Activated CD8-positive, alpha-beta T cell treated with anti-CD3 and anti-CD28 coated beads, Interleukin-2, amount 10 ng/mL, durations not matched to agents 7 days and 5 days (primary cell): ENCODE measurements at regions of chr2 and their contacts with region 1.

Region 1: DNA sequence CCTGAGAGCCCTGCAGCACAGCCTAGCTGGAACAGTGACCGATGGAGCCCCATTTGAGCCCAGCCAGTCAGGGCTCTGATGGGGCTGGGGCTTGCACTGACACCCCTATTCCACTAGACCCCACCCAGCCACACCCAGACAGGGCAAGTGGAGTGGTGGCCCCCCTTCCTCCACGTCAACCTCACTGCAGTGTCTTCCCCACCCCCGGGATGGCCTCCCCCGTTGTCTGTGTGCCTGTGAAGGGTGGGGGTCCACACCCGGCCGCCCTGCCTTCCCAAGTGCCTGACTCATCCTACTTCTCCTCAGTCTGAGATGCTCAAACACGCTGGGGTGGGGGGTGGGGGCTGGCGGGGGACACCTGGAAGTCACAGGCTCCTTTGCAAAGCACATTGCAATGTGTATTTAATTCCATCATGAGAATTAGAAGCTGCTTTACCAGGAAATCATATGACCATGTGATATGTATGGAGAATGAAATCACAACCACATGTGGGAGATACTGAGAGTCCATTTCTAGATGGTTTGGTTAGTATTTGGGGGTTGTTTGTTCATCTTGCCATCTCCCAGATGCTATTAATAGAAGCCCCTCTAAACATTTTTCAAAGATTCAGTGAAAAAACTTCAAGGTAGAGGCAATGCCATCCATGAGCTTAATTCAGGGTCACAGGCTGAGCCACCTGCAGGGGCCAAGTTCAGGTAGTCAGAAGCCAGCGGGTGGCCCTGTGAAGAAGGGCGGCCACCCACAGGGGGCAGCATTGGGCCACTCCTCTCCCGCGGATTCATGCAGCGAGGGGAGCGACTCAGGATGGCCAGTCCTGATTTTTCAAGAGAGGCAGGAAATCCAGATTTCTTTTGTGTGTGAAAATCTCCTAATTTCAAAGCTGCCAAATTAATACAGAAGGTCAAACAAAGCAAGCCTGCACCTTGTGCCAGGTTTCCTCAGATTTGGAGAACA is 22.7 kb upstream of the GMPPA start:
- DNase-seq: peak; percentile 75
- ATAC-seq: peak; percentile 83
- H3K4me3 Mint-ChIP-seq: no peak overlapping the region
- H3K27ac Mint-ChIP-seq: no peak overlapping the region
- H3K4me1 Mint-ChIP-seq: peaks cover 5% of the 10 kb centered on the region
- H3K27me3 Mint-ChIP-seq: peaks cover 2% of the 10 kb centered on the region

Region 2: GRCh38 chr2:219408631-219409030 is 67.3 kb before region 1 on chr2:
- CTCF ChIA-PET with region 1: no interaction called
- POLR2A ChIA-PET with region 1: no interaction called
- DNase-seq: no peak
- ATAC-seq: no peak
- H3K4me3 Mint-ChIP-seq: no peak overlapping the region
- H3K27ac Mint-ChIP-seq: no peak overlapping the region
- H3K4me1 Mint-ChIP-seq: no peaks in the 10 kb centered on the region
- H3K27me3 Mint-ChIP-seq: peaks cover 11% of the 10 kb centered on the region

Region 3: DNA sequence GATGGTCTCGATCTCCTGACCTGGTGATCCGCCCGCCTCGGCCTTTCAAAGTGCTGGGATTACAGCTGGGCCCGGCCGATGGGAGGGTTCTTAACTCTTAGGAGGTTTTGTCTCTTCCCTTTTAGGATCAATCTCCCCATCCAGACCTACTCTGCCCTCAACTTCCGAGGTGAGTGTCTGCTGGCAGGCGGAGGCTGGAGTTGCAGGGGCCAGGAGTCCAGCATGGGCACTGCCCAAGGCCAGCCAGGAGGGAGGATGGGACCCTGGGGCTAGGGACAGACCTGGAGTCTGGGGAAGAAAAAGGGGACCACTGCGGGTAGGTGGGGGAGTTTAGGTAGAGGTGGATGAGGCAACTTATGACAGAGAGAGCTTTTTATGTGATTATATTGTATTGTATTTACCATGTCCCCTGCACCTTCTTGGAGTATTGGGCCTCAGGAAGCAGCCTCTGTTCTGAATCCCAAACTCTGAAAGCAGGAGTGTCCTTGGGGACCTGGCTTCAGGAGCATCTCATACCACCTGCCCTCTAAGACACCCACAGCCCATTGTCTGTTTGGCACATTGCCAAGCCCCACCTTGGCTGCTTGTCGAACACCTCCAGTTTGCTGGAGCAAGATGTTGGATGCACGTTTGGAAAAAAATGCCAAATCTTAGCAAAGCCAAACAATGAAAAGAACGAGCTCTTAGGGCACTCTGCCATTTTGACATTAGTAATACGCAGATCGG is 52.2 kb before region 1 on chr2:
- CTCF ChIA-PET with region 1: no interaction called
- POLR2A ChIA-PET with region 1: no interaction called
- DNase-seq: no peak
- ATAC-seq: no peak
- H3K4me3 Mint-ChIP-seq: no peak overlapping the region
- H3K27ac Mint-ChIP-seq: no peak overlapping the region
- H3K4me1 Mint-ChIP-seq: no peaks in the 10 kb centered on the region
- H3K27me3 Mint-ChIP-seq: peaks cover 14% of the 10 kb centered on the region

Region 4: DNA sequence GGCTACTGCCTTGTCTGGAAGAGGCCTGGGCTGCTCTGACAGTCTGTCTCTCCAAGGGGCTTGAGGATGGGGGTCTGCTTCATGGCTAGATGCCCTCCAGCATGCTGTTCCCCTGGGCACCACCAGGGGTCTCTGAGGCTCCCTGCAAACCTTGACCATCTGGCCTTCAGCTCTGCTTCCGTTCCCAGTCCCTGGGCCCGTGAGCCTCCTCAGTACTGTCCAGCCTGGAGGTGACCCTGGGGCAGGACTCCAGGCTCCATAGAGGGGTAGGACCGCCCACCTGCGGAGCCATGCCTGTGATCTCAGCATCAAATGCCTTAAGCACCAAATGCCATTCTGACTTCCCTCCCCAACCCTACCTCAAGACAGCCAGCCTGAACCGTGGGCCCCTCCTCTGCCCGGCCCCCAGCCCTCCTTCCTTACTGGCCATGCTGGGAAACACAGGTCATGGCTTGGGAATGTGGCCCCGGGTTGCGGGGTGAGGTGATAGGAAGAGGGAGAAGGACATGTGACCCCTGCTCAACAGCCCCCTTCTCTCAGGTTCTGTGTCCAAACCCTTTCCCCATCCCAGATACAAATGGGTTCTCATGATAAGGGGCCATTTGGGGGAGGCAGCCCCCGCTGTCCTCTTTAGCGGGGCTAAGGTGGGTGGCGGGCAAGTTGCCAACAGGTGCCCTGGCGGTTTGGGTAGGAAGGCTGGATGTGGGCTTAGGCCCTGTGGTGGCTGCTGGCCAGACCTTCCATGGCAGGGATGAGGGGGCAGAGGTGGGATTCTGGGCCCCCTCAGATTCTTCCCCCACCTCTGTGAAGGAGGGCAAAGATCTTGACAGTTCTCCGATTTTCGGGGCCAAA is 16.3 kb before region 1 on chr2:
- CTCF ChIA-PET with region 1: interaction called, 15 read pairs
- POLR2A ChIA-PET with region 1: interaction called, 3 read pairs
- DNase-seq: peak; percentile 53
- ATAC-seq: peak; percentile 27
- H3K4me3 Mint-ChIP-seq: no peak overlapping the region
- H3K27ac Mint-ChIP-seq: peak overlapping the region; percentile 52
- H3K4me1 Mint-ChIP-seq: peaks cover 54% of the 10 kb centered on the region
- H3K27me3 Mint-ChIP-seq: no peaks in the 10 kb centered on the region

Region 5: GRCh38 chr2:219552382-219553167 is 76.6 kb after region 1 on chr2:
- CTCF ChIA-PET with region 1: no interaction called
- POLR2A ChIA-PET with region 1: no interaction called
- DNase-seq: peak; percentile 80
- ATAC-seq: peak; percentile 89
- H3K4me3 Mint-ChIP-seq: peak overlapping the region; percentile 69
- H3K27ac Mint-ChIP-seq: no peak overlapping the region
- H3K4me1 Mint-ChIP-seq: peaks cover 7% of the 10 kb centered on the region
- H3K27me3 Mint-ChIP-seq: peaks cover 28% of the 10 kb centered on the region